Naive thymus-derived CD4-positive, alpha-beta T cell (primary cell): ENCODE measurements at regions of chr14 and their contacts with region 1.

Region 1: DNA sequence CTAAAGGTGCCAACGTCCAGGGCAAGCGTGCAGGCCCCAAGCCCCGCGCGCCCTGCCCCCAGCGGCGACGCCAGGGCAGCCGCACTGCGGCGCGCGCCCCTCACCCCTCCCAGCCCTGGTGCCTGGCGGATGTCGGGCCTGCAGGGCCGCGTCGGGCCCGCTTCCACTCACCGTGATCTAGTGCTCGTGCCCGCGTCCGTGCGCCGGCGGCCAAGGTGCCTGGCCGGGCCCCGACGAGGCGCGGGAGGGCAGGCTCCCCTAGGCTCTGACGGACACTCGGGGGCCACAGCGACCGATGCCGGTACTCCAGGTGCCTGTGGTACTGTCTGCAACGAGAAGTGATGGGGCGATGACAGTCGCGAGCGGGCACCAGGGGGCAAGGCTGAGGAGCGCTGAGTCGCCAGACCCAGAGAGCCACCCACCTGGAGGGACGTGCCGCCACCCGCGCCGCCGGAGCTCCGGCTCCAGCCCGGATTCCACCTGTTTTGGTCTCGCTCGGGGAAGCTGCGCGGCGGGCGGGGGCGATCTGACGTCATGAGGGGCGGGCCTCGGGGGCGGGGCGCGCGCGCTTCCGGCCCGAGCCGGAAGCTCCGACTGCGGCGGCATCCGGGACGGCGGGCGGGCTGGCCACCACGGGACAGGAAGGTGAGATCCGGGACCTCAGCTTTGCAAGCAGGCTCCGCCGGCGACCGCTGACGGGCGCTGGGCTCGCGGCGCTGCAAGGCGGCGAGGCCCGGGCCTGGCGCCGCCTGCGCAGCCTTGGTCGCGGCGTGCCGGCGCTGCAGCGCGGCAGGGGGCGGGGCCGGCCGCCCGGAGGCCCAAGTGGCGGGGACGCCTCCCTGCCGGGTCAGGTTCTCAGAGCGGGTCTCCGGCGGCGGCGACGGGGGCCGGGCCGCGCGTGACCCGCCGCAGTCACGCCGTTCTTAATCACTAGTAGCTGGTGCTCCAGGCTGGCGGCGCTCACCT is at the starts of genes LYSET and MOAP1:
- DNase-seq: peak; percentile 78 to 91 (median 89)
- ATAC-seq: peak; percentile 90
- H3K4me3 ChIP-seq: peak within 1 kb of the TSS; percentile 95
- H3K4me3 Mint-ChIP-seq: peak within 1 kb of the TSS; percentile 90 to 98 (median 96)
- H3K27ac ChIP-seq: peak within 1 kb of the TSS; percentile 96
- H3K27ac Mint-ChIP-seq: peak within 1 kb of the TSS; percentile 91 to 98 (median 96)
- H3K4me1 ChIP-seq: peaks cover 9 to 23% of the 10 kb centered on the region in 2 donors
- H3K4me1 Mint-ChIP-seq: peaks cover 24 to 60% (median 42%) of the 10 kb centered on the region in 7 donors
- H3K27me3 ChIP-seq: no peaks in the 10 kb centered on the region
- H3K27me3 Mint-ChIP-seq: no peaks in the 10 kb centered on the region
- total RNA-seq, gene LYSET: 8.0 to 26.6 (median 12.4) TPM
- total RNA-seq, gene MOAP1: 20.5 to 102 (median 43.6) TPM

Region 2: GRCh38 chr14:92793709-92794546 is 390.7 kb before region 1 on chr14 and contains the start of gene GOLGA5:
- CTCF ChIA-PET with region 1: no interaction called
- POLR2A ChIA-PET with region 1: no interaction called
- intact Hi-C with region 1: loop called (anchors 2 kb)
- DNase-seq: peak; percentile 97 to 100 (median 99)
- ATAC-seq: peak; percentile 97
- H3K4me3 ChIP-seq: peak within 1 kb of the TSS; percentile 98
- H3K4me3 Mint-ChIP-seq: peak within 1 kb of the TSS; percentile 78 to 96 (median 92)
- H3K27ac ChIP-seq: peak within 1 kb of the TSS; percentile 91
- H3K27ac Mint-ChIP-seq: peak within 1 kb of the TSS; percentile 78 to 98 (median 95)
- H3K4me1 ChIP-seq: peaks cover 15 to 20% of the 10 kb centered on the region in 2 donors
- H3K4me1 Mint-ChIP-seq: peaks cover 24 to 45% (median 39%) of the 10 kb centered on the region in 7 donors
- H3K27me3 ChIP-seq: no peaks in the 10 kb centered on the region
- H3K27me3 Mint-ChIP-seq: peaks cover 0 to 9% (median 0%) of the 10 kb centered on the region in 5 donors
- total RNA-seq, gene GOLGA5: 9.7 to 25.8 (median 23.5) TPM

Region 3: DNA sequence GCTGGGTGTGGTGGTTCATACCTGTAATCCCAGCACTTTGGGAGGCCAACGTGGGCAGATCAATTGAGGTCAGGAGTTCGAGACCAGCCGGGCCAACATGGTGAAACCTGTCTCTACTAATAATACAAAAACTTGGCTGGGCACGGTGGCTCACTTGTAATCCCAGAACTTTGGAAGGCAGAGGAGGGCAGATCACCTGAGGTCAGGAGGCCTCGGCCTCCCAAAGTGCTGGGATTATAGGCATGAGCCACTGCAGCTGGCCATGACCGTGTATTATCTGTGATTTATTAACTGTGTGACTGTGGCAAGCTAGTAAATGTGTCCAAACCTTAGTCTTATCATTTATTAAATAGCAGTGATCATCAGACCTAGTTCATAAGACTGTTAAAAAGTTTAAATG is 61.9 kb before region 1 on chr14:
- CTCF ChIA-PET with region 1: no interaction called
- POLR2A ChIA-PET with region 1: no interaction called
- intact Hi-C with region 1: no loop called
- DNase-seq: no peak
- ATAC-seq: no peak
- H3K4me3 ChIP-seq: no peak overlapping the region
- H3K4me3 Mint-ChIP-seq: no peak overlapping the region
- H3K27ac ChIP-seq: no peak overlapping the region
- H3K27ac Mint-ChIP-seq: no peak overlapping the region
- H3K4me1 ChIP-seq: no peaks in the 10 kb centered on the region
- H3K4me1 Mint-ChIP-seq: peaks cover 0 to 5% (median 0%) of the 10 kb centered on the region in 7 donors
- H3K27me3 ChIP-seq: no peaks in the 10 kb centered on the region
- H3K27me3 Mint-ChIP-seq: peaks cover 0 to 7% (median 0%) of the 10 kb centered on the region in 5 donors

Region 4: GRCh38 chr14:93137864-93138263 is 46.8 kb before region 1 on chr14:
- CTCF ChIA-PET with region 1: interaction called, 3 read pairs
- POLR2A ChIA-PET with region 1: no interaction called
- intact Hi-C with region 1: loop called in 1 of 2 experiments (anchors 2 kb)
- DNase-seq: no peak
- ATAC-seq: no peak
- H3K4me3 ChIP-seq: no peak overlapping the region
- H3K4me3 Mint-ChIP-seq: no peak overlapping the region
- H3K27ac ChIP-seq: no peak overlapping the region
- H3K27ac Mint-ChIP-seq: no peak overlapping the region
- H3K4me1 ChIP-seq: no peaks in the 10 kb centered on the region
- H3K4me1 Mint-ChIP-seq: peaks cover 2 to 6% (median 4%) of the 10 kb centered on the region in 7 donors
- H3K27me3 ChIP-seq: no peaks in the 10 kb centered on the region
- H3K27me3 Mint-ChIP-seq: no peaks in the 10 kb centered on the region

Region 5: DNA sequence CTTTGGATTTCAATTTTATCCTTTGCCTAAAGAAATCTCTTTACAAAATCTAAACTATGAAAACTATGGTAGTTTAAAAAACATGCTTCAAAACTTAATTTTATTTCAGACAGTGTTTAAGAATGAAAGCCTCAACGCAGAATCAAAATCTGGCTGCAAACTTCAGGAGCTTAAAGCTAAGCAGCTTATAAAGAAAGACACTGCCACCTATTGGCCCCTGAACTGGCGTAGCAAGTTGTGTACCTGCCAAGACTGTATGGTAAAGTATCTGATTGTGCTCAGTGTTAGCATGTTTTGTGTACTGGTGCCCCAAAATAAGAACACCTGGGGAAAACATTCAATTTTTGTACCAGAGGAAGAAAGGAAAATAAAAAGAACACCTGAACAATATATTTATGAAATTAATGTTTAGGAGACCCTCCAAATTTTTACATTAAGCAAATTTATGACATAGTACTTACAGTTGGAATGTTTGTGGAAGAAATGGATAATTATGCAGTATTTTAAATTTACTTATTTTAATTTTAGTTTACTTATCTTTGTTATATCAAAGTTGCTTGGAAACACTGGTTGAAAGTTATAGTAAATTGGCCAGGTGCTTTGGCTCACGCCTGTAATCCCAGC is 34.5 kb after region 1 on chr14:
- CTCF ChIA-PET with region 1: interaction called, 4 read pairs
- POLR2A ChIA-PET with region 1: interaction called, 4 read pairs
- intact Hi-C with region 1: loop called (anchors 1 kb)
- DNase-seq: peak in 7 of 9 donors; percentile 27 to 66 (median 56)
- ATAC-seq: peak; percentile 87
- H3K4me3 ChIP-seq: no peak overlapping the region
- H3K4me3 Mint-ChIP-seq: no peak overlapping the region
- H3K27ac ChIP-seq: no peak overlapping the region
- H3K27ac Mint-ChIP-seq: no peak overlapping the region
- H3K4me1 ChIP-seq: no peaks in the 10 kb centered on the region
- H3K4me1 Mint-ChIP-seq: peaks cover 0 to 4% (median 0%) of the 10 kb centered on the region in 7 donors
- H3K27me3 ChIP-seq: no peaks in the 10 kb centered on the region
- H3K27me3 Mint-ChIP-seq: no peaks in the 10 kb centered on the region

Region 6: GRCh38 chr14:95157327-95158189 is 1972.9 kb after region 1 on chr14 and contains the start of gene DICER1:
- CTCF ChIA-PET with region 1: no interaction called
- POLR2A ChIA-PET with region 1: no interaction called
- intact Hi-C with region 1: loop called in 1 of 2 experiments (anchors 10 kb)
- DNase-seq: peak; percentile 84 to 98 (median 93)
- ATAC-seq: peak; percentile 92
- H3K4me3 ChIP-seq: peak within 1 kb of the TSS; percentile 87
- H3K4me3 Mint-ChIP-seq: peak within 1 kb of the TSS; percentile 94 to 99 (median 98)
- H3K27ac ChIP-seq: peak within 1 kb of the TSS; percentile 82
- H3K27ac Mint-ChIP-seq: peak within 1 kb of the TSS; percentile 97 to 100 (median 99)
- H3K4me1 ChIP-seq: peaks cover 31 to 36% of the 10 kb centered on the region in 2 donors
- H3K4me1 Mint-ChIP-seq: peaks cover 32 to 55% (median 42%) of the 10 kb centered on the region in 7 donors
- H3K27me3 ChIP-seq: no peaks in the 10 kb centered on the region
- H3K27me3 Mint-ChIP-seq: no peaks in the 10 kb centered on the region
- total RNA-seq, gene DICER1: 61.1 to 78.2 (median 67.4) TPM